CD4-positive, alpha-beta memory T cell (primary cell): ENCODE measurements at regions of chr7 and their contacts with region 1.

Region 1: DNA sequence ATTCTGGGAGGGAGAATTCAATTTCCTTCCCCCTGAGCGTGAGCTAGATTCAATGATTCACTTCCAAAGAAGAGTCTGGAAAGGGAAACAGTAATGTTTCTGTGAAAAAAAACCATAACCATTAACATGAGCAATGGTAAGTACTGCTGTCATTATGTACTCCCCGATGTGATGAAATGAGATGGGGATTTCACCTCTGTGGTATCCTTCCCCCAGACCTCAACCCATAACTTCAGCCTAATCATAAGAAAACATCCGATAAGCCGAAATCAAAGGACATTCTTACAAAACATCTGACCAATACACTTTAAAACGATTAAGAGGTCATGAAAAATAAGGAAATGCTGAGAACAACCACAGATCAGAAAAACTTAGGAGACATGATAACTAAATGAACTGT is 27.2 kb downstream of the EZH2 start:
- DNase-seq: no peak
- H3K4me3 ChIP-seq: no peak overlapping the region
- H3K4me3 Mint-ChIP-seq: no peak overlapping the region
- H3K27ac ChIP-seq: no peak overlapping the region
- H3K27ac Mint-ChIP-seq: no peak overlapping the region
- H3K4me1 ChIP-seq: peaks cover 20% of the 10 kb centered on the region
- H3K4me1 Mint-ChIP-seq: peaks cover 11 to 21% (median 16%) of the 10 kb centered on the region in 4 donors
- H3K27me3 ChIP-seq: no peaks in the 10 kb centered on the region
- H3K27me3 Mint-ChIP-seq: no peaks in the 10 kb centered on the region

Region 2: GRCh38 chr7:148503875-148504487 is 352.9 kb before region 1 on chr7:
- CTCF ChIA-PET with region 1: no interaction called
- POLR2A ChIA-PET with region 1: no interaction called
- intact Hi-C with region 1: loop called (anchors 5 kb)
- DNase-seq: peak in 4 of 5 donors; percentile 35 to 52 (median 44)
- H3K4me3 ChIP-seq: no peak overlapping the region
- H3K4me3 Mint-ChIP-seq: no peak overlapping the region
- H3K27ac ChIP-seq: no peak overlapping the region
- H3K27ac Mint-ChIP-seq: no peak overlapping the region
- H3K4me1 ChIP-seq: peaks cover 4% of the 10 kb centered on the region
- H3K4me1 Mint-ChIP-seq: peaks cover 7 to 16% (median 9%) of the 10 kb centered on the region in 4 donors
- H3K27me3 ChIP-seq: no peaks in the 10 kb centered on the region
- H3K27me3 Mint-ChIP-seq: peaks cover 17 to 23% of the 10 kb centered on the region in 2 donors

Region 3: DNA sequence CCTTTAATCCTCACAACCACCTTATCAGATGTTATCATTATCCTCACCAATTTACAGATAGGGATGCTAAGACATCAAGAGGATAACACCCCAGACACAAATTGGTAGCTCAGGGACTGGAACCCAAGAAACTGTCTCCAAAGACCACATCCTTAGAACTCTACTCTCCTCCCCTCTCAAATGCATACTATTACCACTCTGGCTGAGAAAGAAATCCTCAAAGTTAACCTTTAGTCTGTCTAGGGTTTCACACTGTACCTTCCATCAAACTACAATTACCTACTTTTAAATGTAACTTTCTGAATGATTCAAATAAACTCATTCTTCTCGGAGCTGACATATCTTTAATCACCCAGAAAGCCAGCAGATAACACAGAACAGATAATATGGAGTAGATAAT is 20.6 kb after region 1 on chr7:
- CTCF ChIA-PET with region 1: interaction called, 17 read pairs
- POLR2A ChIA-PET with region 1: interaction called, 10 read pairs
- intact Hi-C with region 1: no loop called
- DNase-seq: no peak
- H3K4me3 ChIP-seq: no peak overlapping the region
- H3K4me3 Mint-ChIP-seq: peak overlapping the region in 3 of 8 donors; percentile 6 to 27 (median 9)
- H3K27ac ChIP-seq: no peak overlapping the region
- H3K27ac Mint-ChIP-seq: peak overlapping the region in 2 of 7 donors; percentile 18 to 36
- H3K4me1 ChIP-seq: peaks cover 48% of the 10 kb centered on the region
- H3K4me1 Mint-ChIP-seq: peaks cover 16 to 52% (median 25%) of the 10 kb centered on the region in 4 donors
- H3K27me3 ChIP-seq: no peaks in the 10 kb centered on the region
- H3K27me3 Mint-ChIP-seq: no peaks in the 10 kb centered on the region